ENCODE measurements at regions of chr6 and their contacts with region 1.

Region 1: DNA sequence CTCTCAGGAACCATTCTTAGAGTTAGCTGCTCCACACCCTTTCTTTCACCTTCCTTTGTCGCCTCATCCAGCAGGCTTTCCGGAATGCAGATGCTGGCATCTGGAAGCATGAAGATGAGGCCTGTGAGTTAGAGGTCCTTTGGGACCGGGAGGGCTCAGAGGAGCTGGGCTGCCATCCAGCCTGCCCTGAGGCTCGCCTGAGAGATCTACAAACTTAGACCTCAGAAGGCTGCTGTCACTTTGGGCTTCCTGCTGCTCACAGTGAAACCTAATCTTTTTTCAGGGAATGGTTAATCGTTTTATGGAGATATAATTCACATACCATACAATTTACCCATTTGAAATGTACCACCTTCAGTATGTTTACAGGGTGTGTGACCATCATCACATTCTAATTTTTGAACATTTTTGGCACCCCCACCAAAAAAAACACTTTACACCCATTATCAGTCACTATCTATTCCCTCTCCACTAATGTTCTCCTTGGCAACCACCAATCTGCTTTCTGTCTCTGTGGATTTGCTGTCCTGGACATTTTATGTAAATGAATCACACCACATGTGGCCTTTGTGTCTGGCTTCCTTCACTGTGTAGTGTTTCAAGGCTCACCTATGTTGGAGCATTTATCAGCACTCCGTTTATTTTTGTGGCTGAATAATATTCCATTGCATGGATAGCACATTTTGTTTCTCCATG is 20.0 kb upstream of the MPC1 start:
- DNase-seq: no peak
- ATAC-seq: no peak
- H3K4me3 ChIP-seq: no peak overlapping the region
- H3K27ac ChIP-seq: no peak overlapping the region
- H3K4me1 ChIP-seq: no peaks in the 10 kb centered on the region
- H3K27me3 ChIP-seq: no peaks in the 10 kb centered on the region
- CTCF ChIP-seq: no peak
- POLR2A ChIP-seq: no peak
- RAD21 ChIP-seq: no peak

Region 2: DNA sequence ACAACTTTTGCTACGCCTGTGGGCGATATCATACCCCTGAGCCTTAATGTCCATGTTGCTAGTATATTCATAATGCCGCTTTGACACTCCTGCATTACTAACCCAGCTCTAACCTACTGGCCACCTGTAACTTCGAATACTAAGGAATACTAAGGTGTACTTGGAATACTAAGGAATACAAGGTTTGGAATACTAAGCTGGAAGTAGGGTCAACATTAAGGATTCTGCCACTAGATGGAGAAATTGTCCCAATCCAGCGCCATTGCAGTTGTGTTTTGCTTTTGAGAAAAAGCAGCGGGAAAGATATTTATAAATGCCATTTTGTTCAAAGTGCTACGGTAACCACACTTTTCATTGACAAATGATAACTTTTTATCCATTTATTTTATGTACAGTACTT is 245.8 kb before region 1 on chr6:
- CTCF ChIA-PET with region 1: interaction called, 20 read pairs
- POLR2A ChIA-PET with region 1: interaction called, 3 read pairs
- RAD21 ChIA-PET with region 1: interaction called, 3 to 7 read pairs
- intact Hi-C with region 1: loop called (anchors 1 kb)
- DNase-seq: peak; percentile 7
- ATAC-seq: peak; percentile 78
- H3K4me3 ChIP-seq: no peak overlapping the region
- H3K27ac ChIP-seq: no peak overlapping the region
- H3K4me1 ChIP-seq: no peaks in the 10 kb centered on the region
- H3K27me3 ChIP-seq: no peaks in the 10 kb centered on the region
- CTCF ChIP-seq: peak; percentile 45 to 70 (median 53)
- POLR2A ChIP-seq: no peak
- RAD21 ChIP-seq: peak; percentile 74

Region 3: DNA sequence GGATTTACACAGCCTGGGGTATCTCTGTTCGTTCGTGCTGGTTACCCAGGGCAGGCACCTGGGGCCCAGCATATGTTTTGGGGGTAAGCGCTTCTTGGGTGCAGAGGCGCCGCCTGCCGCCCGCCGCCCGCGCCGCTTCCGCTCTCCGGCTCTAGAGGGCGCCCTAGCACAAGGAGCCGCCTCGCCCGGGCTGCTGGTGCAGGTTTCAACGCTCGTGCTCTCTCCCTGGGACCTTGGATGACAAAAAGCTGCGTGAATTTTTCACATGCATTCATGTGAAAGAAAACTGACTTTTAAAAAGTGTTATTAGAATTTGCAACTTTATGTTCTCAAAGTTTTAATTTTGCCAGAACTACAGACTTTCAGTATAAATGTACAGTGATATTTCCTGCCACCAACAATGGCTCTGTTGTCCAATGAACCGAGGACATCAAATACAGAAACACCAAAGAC is 127.0 kb before region 1 on chr6:
- CTCF ChIA-PET with region 1: interaction called, 17 read pairs
- POLR2A ChIA-PET with region 1: no interaction called
- RAD21 ChIA-PET with region 1: interaction called, 3 to 4 read pairs
- intact Hi-C with region 1: loop called (anchors 1 kb)
- DNase-seq: no peak
- ATAC-seq: peak; percentile 97
- H3K4me3 ChIP-seq: no peak overlapping the region
- H3K27ac ChIP-seq: no peak overlapping the region
- H3K4me1 ChIP-seq: peaks cover 0 to 4% of the 10 kb centered on the region in 2 experiments; a peak in 1 of 4 replicates
- H3K27me3 ChIP-seq: no peaks in the 10 kb centered on the region
- CTCF ChIP-seq: peak; percentile 98 to 99 (median 99)
- POLR2A ChIP-seq: no peak
- RAD21 ChIP-seq: peak; percentile 97

Region 4: DNA sequence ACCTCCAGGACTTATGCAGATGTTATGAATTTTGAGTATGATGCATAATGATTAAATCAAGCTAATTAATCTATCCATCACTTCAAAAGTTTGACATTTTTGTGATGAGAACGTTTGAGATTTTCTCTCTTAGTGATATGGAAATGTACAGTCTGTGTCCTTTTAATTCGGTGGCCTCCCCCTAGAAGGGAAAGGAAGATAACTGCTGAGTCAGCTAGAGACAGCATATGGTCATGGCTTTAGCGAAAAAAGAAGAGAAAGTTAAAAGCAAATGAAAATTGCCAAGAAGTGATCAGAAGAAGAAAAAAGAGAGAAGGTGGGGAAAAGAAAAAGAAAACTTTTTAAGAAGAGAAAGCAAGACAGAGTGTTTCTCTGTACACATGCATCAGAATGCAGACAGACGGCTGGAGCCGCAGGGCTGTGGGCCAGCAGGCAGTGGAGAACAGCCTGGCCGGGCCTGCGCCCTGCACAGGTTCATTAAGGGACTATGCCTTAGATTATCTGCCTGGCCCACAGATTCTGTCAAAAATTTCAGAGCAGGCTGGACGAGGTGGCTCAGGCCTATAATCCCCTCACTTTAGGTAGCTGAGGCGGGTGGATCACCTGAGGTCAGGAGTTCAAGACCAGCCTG is 102.3 kb before region 1 on chr6:
- CTCF ChIA-PET with region 1: no interaction called
- POLR2A ChIA-PET with region 1: no interaction called
- RAD21 ChIA-PET with region 1: no interaction called
- intact Hi-C with region 1: no loop called
- DNase-seq: no peak
- ATAC-seq: no peak
- H3K4me3 ChIP-seq: no peak overlapping the region
- H3K27ac ChIP-seq: no peak overlapping the region
- H3K4me1 ChIP-seq: no peaks in the 10 kb centered on the region
- H3K27me3 ChIP-seq: peaks cover 5% of the 10 kb centered on the region
- CTCF ChIP-seq: no peak
- POLR2A ChIP-seq: no peak
- RAD21 ChIP-seq: no peak

Region 5: DNA sequence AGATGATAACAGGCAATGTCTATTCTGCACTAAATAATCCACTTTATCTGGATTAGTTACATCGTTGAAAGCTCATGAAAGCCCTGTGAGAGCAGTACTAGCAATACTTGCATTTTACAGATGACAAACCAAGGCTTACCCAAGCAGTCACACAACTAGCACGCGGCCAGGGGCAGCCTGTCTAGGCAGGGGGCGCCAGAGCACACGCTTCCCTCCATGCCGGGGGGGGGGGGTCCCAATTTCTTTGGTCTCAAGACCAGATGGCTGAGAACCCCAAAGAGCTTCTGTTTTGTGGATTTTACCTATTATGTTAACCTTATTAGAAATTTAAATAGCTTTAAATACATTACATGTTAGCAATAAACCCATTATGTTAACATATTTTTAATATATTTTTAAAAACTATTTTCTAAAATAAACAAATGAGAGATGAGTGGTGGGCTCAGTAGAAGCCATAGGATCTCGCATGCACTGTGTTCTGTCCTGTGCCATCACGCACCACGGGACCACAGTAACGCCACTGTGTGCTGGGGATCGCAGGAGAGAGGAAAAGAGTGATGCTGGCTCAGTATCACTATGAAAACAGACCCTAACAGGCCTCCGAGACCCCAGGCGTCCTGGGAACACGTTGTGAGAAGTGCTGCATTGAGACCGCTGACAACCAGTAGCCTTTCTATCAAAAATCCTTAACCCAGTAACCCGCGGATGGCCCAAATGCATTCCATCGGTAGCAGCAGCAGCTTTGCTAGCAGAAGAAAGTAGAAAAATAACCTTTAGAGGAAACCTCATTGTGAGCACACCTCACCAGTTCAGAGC is 89.3 kb before region 1 on chr6:
- CTCF ChIA-PET with region 1: interaction called, 12 read pairs
- POLR2A ChIA-PET with region 1: no interaction called
- RAD21 ChIA-PET with region 1: interaction called, 3 to 7 read pairs
- intact Hi-C with region 1: loop called (anchors 1 kb)
- DNase-seq: peak; percentile 53
- ATAC-seq: peak; percentile 98
- H3K4me3 ChIP-seq: no peak overlapping the region
- H3K27ac ChIP-seq: no peak overlapping the region
- H3K4me1 ChIP-seq: peaks cover 0 to 8% of the 10 kb centered on the region in 2 experiments; a peak in 2 of 4 replicates
- H3K27me3 ChIP-seq: no peaks in the 10 kb centered on the region
- CTCF ChIP-seq: peak; percentile 80 to 85 (median 85)
- POLR2A ChIP-seq: no peak
- RAD21 ChIP-seq: peak; percentile 79

Measured in HCT116 (cell line).